ENCODE measurements at regions of chr7 and their contacts with region 1.

Region 1: GRCh38 chr7:80134536-80135320 is at the start of gene GNAI1:
- DNase-seq: peak; percentile 64 to 75
- ATAC-seq: peak; percentile 74 to 84 (median 78)
- H3K4me3 ChIP-seq: peak within 1 kb of the TSS; percentile 95
- H3K27ac ChIP-seq: peak within 1 kb of the TSS; percentile 83
- H3K4me1 ChIP-seq: peaks cover 18% of the 10 kb centered on the region
- H3K27me3 ChIP-seq: no peaks in the 10 kb centered on the region
- CTCF ChIP-seq: peak; percentile 32
- total RNA-seq, gene GNAI1: 5.1 to 13.7 (median 8.9) TPM

Region 2: GRCh38 chr7:79893991-79894390 is 240.7 kb before region 1 on chr7:
- intact Hi-C with region 1: no loop called
- DNase-seq: no peak
- ATAC-seq: no peak
- H3K4me3 ChIP-seq: no peak overlapping the region
- H3K27ac ChIP-seq: no peak overlapping the region
- H3K4me1 ChIP-seq: no peaks in the 10 kb centered on the region
- H3K27me3 ChIP-seq: no peaks in the 10 kb centered on the region
- CTCF ChIP-seq: no peak

Region 3: DNA sequence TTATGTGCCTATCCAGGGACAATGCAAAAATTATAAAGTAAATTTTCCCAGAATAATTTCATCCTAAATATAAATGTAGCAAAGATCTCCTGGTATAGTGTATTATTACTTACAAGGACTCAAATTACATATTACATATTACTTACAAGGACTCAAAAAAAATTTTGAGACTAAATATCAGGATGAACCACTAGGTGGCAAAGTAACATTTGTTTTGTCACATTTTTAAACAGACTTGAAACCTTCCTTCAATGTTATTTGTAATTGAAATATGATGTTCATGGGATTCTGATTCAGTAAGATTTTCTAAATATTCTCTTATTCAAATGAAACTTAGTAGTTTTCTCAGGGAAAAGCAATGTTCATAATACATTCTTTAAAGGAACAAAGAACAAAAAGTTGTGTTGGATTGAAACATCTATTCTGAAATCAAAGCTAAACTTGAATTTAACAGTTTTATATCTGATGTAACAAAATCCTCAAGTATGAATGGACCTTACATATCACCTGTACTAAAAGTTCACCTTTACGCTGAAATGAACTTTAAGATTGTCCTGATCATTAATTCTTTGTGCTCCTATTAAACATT is 74.4 kb before region 1 on chr7:
- intact Hi-C with region 1: loop called in 1 of 2 experiments (anchors 10 kb)
- DNase-seq: no peak
- ATAC-seq: no peak
- H3K4me3 ChIP-seq: no peak overlapping the region
- H3K27ac ChIP-seq: no peak overlapping the region
- H3K4me1 ChIP-seq: no peaks in the 10 kb centered on the region
- H3K27me3 ChIP-seq: no peaks in the 10 kb centered on the region
- CTCF ChIP-seq: peak; percentile 67

Region 4: DNA sequence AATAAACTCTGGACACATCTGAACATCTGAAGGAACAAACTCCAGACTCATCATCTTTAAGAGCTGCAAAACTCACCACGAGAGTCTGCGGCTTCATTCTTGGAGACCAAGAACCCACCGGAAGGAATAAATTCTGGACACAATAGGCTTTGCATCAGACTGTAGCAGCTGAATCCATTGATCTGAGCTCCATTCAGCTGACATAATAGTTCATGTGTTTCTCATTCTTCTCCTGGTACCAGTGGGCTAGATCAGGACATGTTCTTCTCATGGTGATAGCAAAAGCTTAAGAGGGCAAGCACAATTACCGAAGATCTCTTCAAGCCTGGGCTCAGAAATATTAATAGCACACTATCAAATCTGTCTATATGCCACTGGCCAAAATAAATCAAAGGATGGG is 20.6 kb before region 1 on chr7:
- intact Hi-C with region 1: no loop called
- DNase-seq: no peak
- ATAC-seq: no peak
- H3K4me3 ChIP-seq: no peak overlapping the region
- H3K27ac ChIP-seq: no peak overlapping the region
- H3K4me1 ChIP-seq: no peaks in the 10 kb centered on the region
- H3K27me3 ChIP-seq: no peaks in the 10 kb centered on the region
- CTCF ChIP-seq: no peak

Region 5: GRCh38 chr7:80186721-80187120 is 52.0 kb after region 1 on chr7:
- intact Hi-C with region 1: loop called in 1 of 2 experiments (anchors 5 kb)
- DNase-seq: no peak
- ATAC-seq: no peak
- H3K4me3 ChIP-seq: no peak overlapping the region
- H3K27ac ChIP-seq: no peak overlapping the region
- H3K4me1 ChIP-seq: no peaks in the 10 kb centered on the region
- H3K27me3 ChIP-seq: no peaks in the 10 kb centered on the region
- CTCF ChIP-seq: no peak

Region 6: DNA sequence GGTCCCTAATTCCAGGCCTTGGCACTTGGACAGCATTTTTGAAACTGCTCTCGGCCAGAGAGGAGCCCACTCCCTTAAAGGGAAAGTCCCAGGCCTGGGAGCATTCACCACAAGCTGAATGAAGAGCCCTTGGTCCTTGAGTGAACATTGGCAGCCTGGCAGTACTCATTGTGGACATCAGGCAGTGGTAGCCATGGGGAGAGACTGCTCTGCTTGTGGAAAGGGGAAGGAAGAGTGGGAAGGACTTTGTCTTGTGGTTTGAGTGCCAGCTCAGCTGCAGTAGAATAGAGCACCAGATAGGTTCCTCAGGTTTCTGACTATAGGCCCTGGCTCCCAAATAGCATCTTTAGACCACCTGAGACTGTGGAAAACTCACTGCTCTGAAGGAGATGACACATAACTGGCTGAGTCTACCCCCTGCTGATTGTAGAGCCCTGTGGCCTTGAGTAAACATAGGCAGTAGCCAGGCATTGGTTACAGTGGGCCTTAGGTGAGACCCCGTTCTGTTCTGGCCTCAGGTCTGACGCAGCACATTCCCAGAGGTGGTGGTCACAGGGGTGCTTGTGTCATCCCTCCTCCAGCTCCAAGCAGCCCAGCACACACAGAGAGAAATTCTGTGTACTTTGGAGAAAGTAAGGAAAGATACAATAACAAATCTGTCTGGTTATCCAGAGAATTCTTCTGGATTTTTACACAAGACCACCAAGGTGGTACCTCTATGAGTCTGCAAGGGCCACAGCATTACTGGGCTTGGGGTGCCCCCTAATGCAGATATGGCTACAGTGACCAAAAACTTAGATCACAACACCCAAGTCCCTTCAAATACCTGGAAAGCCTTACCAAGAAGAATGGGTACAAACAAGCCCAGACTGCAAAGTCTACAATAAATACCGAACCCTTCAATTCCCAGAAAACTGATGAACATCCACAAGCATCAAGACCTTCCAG is 153.7 kb after region 1 on chr7:
- intact Hi-C with region 1: loop called in 1 of 2 experiments (anchors 5 kb)
- DNase-seq: no peak
- ATAC-seq: no peak
- H3K4me3 ChIP-seq: no peak overlapping the region
- H3K27ac ChIP-seq: no peak overlapping the region
- H3K4me1 ChIP-seq: no peaks in the 10 kb centered on the region
- H3K27me3 ChIP-seq: no peaks in the 10 kb centered on the region
- CTCF ChIP-seq: peak; percentile 18

Region 7: DNA sequence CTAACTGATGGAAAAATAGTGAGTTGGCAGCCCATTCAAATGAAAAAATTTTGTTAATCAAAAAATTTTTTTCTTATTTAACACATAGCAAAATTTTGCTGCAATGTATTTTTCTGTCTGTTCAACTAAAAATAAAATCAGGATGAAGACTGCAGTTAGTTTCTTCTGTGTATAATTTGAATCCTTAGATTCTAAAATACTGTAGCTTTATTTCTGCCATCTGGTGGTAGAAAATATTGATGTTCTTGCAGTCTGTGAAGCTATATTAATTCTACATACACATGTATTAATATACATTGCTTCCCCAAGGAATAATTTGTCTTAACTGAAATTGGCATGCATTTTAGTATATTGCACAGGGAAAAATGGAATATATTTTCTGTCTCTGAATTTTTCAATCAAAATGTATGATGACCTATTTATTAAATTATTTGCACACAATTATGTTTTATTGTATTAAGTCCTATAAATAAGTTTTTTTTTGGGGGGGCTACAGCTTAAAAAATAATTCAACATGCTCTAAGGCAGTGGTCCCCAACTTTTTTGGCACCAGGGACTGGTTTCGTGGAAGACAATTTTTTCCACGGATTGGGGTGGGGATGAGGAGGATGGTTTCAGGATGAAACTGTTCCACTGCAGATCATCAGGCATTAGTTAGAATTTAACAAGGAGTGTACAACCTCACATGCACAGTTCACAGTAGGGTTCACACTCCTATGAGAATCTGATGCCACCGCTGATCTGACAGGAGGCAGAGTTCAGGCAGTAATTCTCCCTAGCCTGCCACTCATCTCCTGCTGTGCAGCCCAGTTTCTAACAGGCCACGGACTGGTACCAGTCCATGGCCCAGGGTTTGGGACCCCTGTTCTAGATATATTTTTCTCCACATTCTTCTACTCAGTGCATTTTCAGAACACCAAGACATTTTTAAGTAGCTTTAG is 257.8 kb after region 1 on chr7:
- intact Hi-C with region 1: loop called in 1 of 2 experiments (anchors 10 kb)
- DNase-seq: no peak
- ATAC-seq: no peak
- H3K4me3 ChIP-seq: no peak overlapping the region
- H3K27ac ChIP-seq: no peak overlapping the region
- H3K4me1 ChIP-seq: no peaks in the 10 kb centered on the region
- H3K27me3 ChIP-seq: no peaks in the 10 kb centered on the region
- CTCF ChIP-seq: peak; percentile 59

Measured in psoas muscle (tissue), 8 donors.